ENCODE measurements at regions of chr5 and their contacts with region 1.

Region 1: GRCh38 chr5:65801352-65801783 is 79.4 kb downstream of the NLN start:
- DNase-seq: no peak
- H3K4me3 Mint-ChIP-seq: no peak overlapping the region
- H3K27ac Mint-ChIP-seq: no peak overlapping the region
- H3K4me1 Mint-ChIP-seq: peaks cover 38% of the 10 kb centered on the region
- H3K27me3 Mint-ChIP-seq: peaks cover 13% of the 10 kb centered on the region

Region 2: DNA sequence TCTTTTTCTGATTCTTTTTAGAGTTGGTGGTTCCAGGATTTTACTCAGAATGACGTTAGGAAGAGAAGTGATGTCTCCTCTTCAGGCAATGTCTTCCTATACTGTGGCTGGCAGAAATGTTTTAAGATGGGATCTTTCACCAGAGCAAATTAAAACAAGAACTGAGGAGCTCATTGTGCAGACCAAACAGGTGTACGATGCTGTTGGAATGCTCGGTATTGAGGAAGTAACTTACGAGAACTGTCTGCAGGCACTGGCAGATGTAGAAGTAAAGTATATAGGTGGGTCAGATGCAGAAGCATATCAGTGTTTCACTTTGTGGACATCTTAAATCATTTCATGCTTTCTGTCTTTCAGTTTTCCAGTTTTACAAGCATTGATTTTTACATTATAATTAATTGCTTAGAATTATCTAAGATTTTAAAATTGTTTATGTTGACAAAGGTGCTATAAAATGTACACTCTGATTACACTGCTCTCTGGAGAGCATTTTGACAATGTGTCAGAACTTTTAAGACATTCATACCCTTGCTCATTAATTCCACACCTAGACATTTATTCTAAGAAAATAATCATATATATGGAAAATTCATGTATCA is 42.7 kb before region 1 on chr5:
- intact Hi-C with region 1: no loop called
- DNase-seq: no peak
- H3K4me3 Mint-ChIP-seq: no peak overlapping the region
- H3K27ac Mint-ChIP-seq: no peak overlapping the region
- H3K4me1 Mint-ChIP-seq: peaks cover 6% of the 10 kb centered on the region
- H3K27me3 Mint-ChIP-seq: no peaks in the 10 kb centered on the region

Region 3: GRCh38 chr5:65769539-65769938 is 31.8 kb before region 1 on chr5:
- intact Hi-C with region 1: loop called (anchors 5 kb)
- DNase-seq: no peak
- H3K4me3 Mint-ChIP-seq: no peak overlapping the region
- H3K27ac Mint-ChIP-seq: peak overlapping the region; percentile 60
- H3K4me1 Mint-ChIP-seq: peaks cover 26% of the 10 kb centered on the region
- H3K27me3 Mint-ChIP-seq: no peaks in the 10 kb centered on the region

Region 4: GRCh38 chr5:65779643-65780042 is 21.7 kb before region 1 on chr5:
- intact Hi-C with region 1: loop called (anchors 2 kb)
- DNase-seq: no peak
- H3K4me3 Mint-ChIP-seq: no peak overlapping the region
- H3K27ac Mint-ChIP-seq: no peak overlapping the region
- H3K4me1 Mint-ChIP-seq: peaks cover 22% of the 10 kb centered on the region
- H3K27me3 Mint-ChIP-seq: no peaks in the 10 kb centered on the region

Region 5: GRCh38 chr5:65981548-65981947 is 180.2 kb after region 1 on chr5:
- intact Hi-C with region 1: no loop called
- DNase-seq: no peak
- H3K4me3 Mint-ChIP-seq: no peak overlapping the region
- H3K27ac Mint-ChIP-seq: peak overlapping the region; percentile 31
- H3K4me1 Mint-ChIP-seq: peaks cover 28% of the 10 kb centered on the region
- H3K27me3 Mint-ChIP-seq: no peaks in the 10 kb centered on the region